Calu3 (cell line): ENCODE measurements at regions of chrX and their contacts with region 1.

Region 1: DNA sequence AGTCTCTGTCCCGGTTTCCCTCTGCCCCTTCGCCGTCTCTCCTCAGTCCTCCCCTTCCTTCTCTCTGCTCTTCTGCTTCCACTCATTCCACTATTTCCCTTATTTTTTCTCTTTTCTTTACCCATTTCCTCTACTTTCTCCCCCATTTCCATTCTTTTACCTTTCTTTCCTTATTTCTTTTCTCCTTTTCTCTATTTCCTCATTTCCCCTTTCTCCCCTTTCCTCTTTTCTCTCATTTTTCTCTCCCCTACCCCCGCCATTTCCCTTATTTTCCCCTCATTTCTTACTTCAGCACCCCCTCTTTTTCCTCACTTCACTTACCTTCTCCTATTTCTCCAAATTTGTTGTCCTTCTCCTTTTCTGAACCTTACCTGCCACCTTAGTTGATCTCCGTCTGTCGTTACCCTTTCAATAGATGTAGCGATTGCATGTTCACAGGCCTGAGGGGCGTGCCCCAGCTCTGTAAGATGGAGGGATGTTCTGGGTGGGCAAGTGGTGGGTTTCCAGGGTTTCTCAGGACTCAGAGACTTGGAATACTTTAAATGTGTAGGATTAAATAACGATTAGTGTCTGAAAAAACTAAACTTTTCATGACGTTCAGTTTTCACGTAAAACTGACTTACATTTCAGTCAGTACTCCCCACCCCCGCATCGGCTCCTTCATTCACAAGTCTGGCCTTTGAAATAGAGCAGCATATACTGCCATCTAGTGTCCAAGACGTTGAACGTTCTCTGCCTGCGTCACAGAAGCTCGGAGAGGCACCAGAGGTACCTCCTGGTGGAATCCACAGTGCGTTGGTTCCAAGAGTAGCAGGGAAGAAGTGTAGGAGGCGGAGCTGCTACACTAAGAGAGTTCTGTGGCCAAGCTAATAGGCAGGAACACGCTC is 641 bp upstream of the NCBP2L start:
- DNase-seq: peak; percentile 73
- H3K4me3 Mint-ChIP-seq: peak overlapping the region; percentile 72
- H3K27ac Mint-ChIP-seq: peak overlapping the region; percentile 42
- H3K4me1 Mint-ChIP-seq: peaks cover 20% of the 10 kb centered on the region
- H3K27me3 Mint-ChIP-seq: no peaks in the 10 kb centered on the region
- CTCF ChIP-seq: peak; percentile 61

Region 2: GRCh38 chrX:107272431-107272921 is 504.4 kb before region 1 on chrX:
- CTCF ChIA-PET with region 1: no interaction called
- intact Hi-C with region 1: no loop called
- DNase-seq: peak; percentile 61
- H3K4me3 Mint-ChIP-seq: peak overlapping the region; percentile 66
- H3K27ac Mint-ChIP-seq: no peak overlapping the region
- H3K4me1 Mint-ChIP-seq: no peaks in the 10 kb centered on the region
- H3K27me3 Mint-ChIP-seq: no peaks in the 10 kb centered on the region
- CTCF ChIP-seq: peak; percentile 55

Region 3: DNA sequence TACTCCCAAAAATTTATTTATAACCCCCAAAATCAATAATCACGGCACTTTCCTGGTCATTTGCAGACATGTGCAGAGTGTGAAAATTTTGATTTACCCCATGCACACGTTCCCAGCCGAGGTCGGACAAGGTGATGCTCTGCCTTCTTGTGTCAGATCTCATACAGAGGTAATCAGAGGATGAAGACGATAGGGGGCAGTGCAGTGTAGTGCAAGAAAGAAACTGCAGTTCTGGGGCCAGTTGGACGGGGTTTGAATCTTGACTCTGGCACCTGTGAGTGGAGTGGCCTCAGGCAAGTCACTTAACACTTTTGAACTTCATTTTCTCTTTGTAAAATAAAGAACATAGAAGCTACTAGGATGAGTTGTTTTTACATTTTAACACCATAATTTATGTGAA is 239.1 kb before region 1 on chrX:
- CTCF ChIA-PET with region 1: interaction called, 5 read pairs
- intact Hi-C with region 1: loop called (anchors 5 kb)
- DNase-seq: peak; percentile 63
- H3K4me3 Mint-ChIP-seq: no peak overlapping the region
- H3K27ac Mint-ChIP-seq: no peak overlapping the region
- H3K4me1 Mint-ChIP-seq: no peaks in the 10 kb centered on the region
- H3K27me3 Mint-ChIP-seq: peaks cover 22% of the 10 kb centered on the region
- CTCF ChIP-seq: no peak

Region 4: GRCh38 chrX:107654872-107655761 is 121.8 kb before region 1 on chrX:
- CTCF ChIA-PET with region 1: interaction called, 16 read pairs
- intact Hi-C with region 1: loop called (anchors 1 kb)
- DNase-seq: peak; percentile 73
- H3K4me3 Mint-ChIP-seq: peak overlapping the region; percentile 17
- H3K27ac Mint-ChIP-seq: peak overlapping the region; percentile 90
- H3K4me1 Mint-ChIP-seq: peaks cover 21% of the 10 kb centered on the region
- H3K27me3 Mint-ChIP-seq: no peaks in the 10 kb centered on the region
- CTCF ChIP-seq: peak; percentile 62

Region 5: GRCh38 chrX:107716816-107717700 is 59.8 kb before region 1 on chrX:
- CTCF ChIA-PET with region 1: interaction called, 41 read pairs
- intact Hi-C with region 1: loop called (anchors 2 kb)
- DNase-seq: peak; percentile 77
- H3K4me3 Mint-ChIP-seq: peak overlapping the region; percentile 92
- H3K27ac Mint-ChIP-seq: peak overlapping the region; percentile 82
- H3K4me1 Mint-ChIP-seq: peaks cover 51% of the 10 kb centered on the region
- H3K27me3 Mint-ChIP-seq: no peaks in the 10 kb centered on the region
- CTCF ChIP-seq: no peak

Region 6: DNA sequence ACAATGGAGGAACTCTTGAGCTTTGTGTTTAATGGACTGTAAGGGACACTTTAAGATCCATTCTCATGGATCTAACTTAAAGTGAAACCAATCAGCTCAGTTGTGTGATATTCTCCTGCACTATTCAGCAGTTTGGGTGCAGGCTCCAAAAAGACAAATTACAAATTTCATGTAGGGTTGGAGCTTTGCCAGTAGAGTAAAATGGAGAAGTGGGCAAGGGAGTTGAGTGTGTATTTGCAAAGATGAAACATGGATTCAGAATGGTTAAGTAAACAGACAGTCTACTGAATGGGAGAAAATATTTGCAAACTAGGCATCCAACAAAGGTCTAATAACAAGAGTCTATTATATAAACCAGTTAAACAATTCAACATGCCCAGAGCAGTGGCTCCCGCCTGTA is 27.5 kb after region 1 on chrX:
- CTCF ChIA-PET with region 1: no interaction called
- intact Hi-C with region 1: no loop called
- DNase-seq: no peak
- H3K4me3 Mint-ChIP-seq: no peak overlapping the region
- H3K27ac Mint-ChIP-seq: no peak overlapping the region
- H3K4me1 Mint-ChIP-seq: no peaks in the 10 kb centered on the region
- H3K27me3 Mint-ChIP-seq: peaks cover 15% of the 10 kb centered on the region
- CTCF ChIP-seq: no peak

Region 7: GRCh38 chrX:107894038-107894437 is 117.1 kb after region 1 on chrX:
- CTCF ChIA-PET with region 1: no interaction called
- intact Hi-C with region 1: loop called (anchors 5 kb)
- DNase-seq: peak; percentile 42
- H3K4me3 Mint-ChIP-seq: no peak overlapping the region
- H3K27ac Mint-ChIP-seq: no peak overlapping the region
- H3K4me1 Mint-ChIP-seq: no peaks in the 10 kb centered on the region
- H3K27me3 Mint-ChIP-seq: no peaks in the 10 kb centered on the region
- CTCF ChIP-seq: peak; percentile 42